Sciatic nerve (tissue), 2 donors: ENCODE measurements at regions of chr9 and their contacts with region 1.

Region 1: DNA sequence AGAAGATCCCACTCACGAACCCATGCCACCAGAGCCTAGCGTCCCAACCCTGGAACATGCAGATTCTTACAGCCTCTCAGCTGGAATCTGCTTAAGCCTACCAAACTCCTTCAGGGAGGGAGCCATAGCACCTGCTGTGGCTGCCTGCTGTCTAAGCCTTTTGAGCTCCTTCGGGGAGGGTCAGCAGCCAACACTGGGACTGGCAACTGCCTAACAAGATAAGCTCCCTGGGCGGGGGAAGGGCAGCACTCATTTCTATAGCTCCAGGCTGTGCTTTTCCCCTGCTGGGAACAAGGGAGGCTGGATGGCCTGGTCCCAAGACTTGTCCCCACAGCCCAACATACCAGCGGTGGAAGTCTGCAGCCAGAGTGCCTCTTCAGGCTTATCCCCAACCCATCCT is 199.1 kb upstream of the OR13F1 start:
- DNase-seq: no peak
- ATAC-seq: no peak

Region 2: GRCh38 chr9:103522409-103522808 is 782.5 kb before region 1 on chr9:
- intact Hi-C with region 1: loop called (anchors 5 kb)
- DNase-seq: no peak
- ATAC-seq: no peak